ENCODE measurements at regions of chr4 and their contacts with region 1.

Region 1: GRCh38 chr4:21768349-21769310 is 179.9 kb downstream of the KCNIP4 start:
- DNase-seq: no peak
- ATAC-seq: no peak

Region 2: DNA sequence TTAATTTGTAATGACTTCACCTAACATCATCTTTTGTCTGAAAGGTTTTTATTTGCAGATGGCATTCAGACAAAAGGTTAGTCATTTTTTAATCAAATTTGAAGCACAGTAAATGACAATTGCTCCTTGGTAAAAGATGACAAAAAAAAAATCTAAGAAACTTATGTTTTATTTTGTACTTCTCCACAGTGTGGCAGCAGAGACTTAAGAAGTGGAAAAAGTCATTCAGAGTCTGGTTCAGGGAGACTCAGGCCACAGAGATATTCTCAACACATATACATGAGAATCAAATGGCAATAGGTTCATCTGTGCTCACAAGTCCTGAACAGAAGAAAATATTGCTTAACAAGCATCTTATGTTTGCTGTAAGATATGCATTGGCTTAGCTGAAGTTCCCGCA is 256.3 kb before region 1 on chr4:
- intact Hi-C with region 1: loop called (anchors 2 to 10 kb)
- DNase-seq: no peak
- ATAC-seq: no peak

Region 3: DNA sequence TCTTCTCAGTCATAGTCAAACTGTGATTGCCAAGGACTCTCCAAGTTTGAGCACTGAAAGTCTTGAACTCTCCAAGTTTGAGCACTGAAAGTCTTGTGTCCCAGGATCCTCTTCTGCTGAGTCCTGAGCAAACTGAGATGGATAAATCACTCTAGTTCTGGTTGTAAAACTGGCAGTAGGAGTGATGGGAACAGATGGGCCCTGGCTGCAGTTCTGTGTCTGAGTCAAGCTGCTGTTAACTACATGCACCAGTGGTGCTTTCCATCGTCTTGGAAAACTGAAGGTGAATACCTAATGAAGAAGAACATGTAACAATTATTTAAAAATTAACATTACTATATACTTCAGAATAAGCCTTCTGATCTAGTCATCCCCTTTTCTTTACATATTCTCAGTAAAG is 207.5 kb after region 1 on chr4:
- intact Hi-C with region 1: no loop called
- DNase-seq: no peak
- ATAC-seq: no peak

Measured in left colon (tissue), 2 donors.